ENCODE measurements at regions of chr1 and their contacts with region 1.

Region 1: GRCh38 chr1:181430015-181430885 is 53.1 kb upstream of the CACNA1E start:
- DNase-seq: no peak
- ATAC-seq: no peak
- H3K4me3 Mint-ChIP-seq: no peak overlapping the region
- H3K27ac Mint-ChIP-seq: no peak overlapping the region
- H3K4me1 Mint-ChIP-seq: no peaks in the 10 kb centered on the region
- H3K27me3 Mint-ChIP-seq: peaks cover 28% of the 10 kb centered on the region

Region 2: DNA sequence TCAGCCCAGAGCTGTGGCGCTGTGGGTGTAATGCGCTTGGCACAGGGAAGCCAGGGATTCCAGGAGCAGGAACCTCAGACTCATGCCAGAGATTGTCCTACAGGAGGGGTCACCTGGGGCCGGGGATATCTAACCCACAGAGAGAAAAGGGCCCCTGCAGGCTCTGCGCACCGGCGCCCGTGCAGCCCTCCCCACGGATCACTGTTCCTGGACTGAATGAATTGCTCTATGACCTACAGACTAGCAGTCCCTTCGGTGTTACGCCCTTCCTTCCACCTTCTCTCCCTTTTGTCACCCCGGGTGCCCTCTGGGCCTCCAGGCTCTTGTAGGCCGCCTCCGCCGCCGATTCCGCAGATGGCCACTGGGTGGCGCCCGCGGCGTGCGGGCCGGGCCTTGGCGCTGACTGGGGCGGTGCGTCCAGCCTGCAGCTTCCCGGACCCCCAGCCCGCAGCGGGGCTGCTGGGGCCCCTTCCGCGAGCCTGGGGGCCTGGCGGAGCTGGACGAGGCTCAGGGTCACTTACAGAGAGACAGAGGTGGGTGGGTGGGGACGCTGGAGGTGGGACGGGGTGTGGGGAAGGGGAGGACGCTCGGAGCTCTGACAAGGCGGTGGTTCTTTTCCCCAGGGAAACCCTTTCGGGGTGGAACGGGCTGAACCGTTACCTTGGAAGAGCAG is 240.4 kb before region 1 on chr1:
- CTCF ChIA-PET with region 1: interaction called, 139 read pairs
- POLR2A ChIA-PET with region 1: no interaction called
- DNase-seq: peak; percentile 76
- ATAC-seq: peak; percentile 92
- H3K4me3 Mint-ChIP-seq: no peak overlapping the region
- H3K27ac Mint-ChIP-seq: no peak overlapping the region
- H3K4me1 Mint-ChIP-seq: peaks cover 2% of the 10 kb centered on the region
- H3K27me3 Mint-ChIP-seq: peaks cover 9% of the 10 kb centered on the region

Region 3: DNA sequence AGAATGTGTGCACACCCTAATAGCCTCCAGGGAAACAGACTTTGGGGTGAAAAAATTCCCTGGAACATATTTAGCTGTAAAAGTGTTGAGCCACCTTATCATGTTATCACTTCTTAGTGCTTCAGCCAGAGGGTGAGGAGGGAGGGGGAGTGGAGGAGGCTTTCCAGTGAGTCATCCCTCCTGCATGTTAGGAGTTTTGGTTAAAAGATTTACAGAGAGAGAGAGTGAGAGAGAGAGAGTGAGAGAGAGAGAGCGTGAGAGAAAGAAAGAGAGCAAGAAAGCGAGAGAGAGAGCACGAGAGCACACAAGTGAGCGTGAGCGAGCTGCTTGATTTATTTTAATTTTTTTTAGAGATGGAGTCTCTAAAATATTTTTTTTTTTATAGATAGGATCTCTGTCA is 39.6 kb after region 1 on chr1:
- CTCF ChIA-PET with region 1: no interaction called
- POLR2A ChIA-PET with region 1: no interaction called
- DNase-seq: no peak
- ATAC-seq: no peak
- H3K4me3 Mint-ChIP-seq: no peak overlapping the region
- H3K27ac Mint-ChIP-seq: no peak overlapping the region
- H3K4me1 Mint-ChIP-seq: no peaks in the 10 kb centered on the region
- H3K27me3 Mint-ChIP-seq: peaks cover 45% of the 10 kb centered on the region

Measured in activated CD8-positive, alpha-beta T cell treated with anti-CD3 and anti-CD28 coated beads, Interleukin-2, amount 10 ng/mL, durations not matched to agents 7 days and 5 days (primary cell).